RWPE1 (cell line): ENCODE measurements at regions of chr22 and their contacts with region 1.

Region 1: GRCh38 chr22:31661851-31662656 is at the start of gene PISD:
- DNase-seq: peak; percentile 94
- H3K27ac ChIP-seq: peak within 1 kb of the TSS; percentile 89
- CTCF ChIP-seq: no peak

Region 2: GRCh38 chr22:31337161-31337560 is 324.9 kb before region 1 on chr22:
- CTCF ChIA-PET with region 1: no interaction called
- POLR2A ChIA-PET with region 1: no interaction called
- DNase-seq: peak; percentile 38
- H3K27ac ChIP-seq: peak overlapping the region; percentile 46
- CTCF ChIP-seq: no peak

Region 3: DNA sequence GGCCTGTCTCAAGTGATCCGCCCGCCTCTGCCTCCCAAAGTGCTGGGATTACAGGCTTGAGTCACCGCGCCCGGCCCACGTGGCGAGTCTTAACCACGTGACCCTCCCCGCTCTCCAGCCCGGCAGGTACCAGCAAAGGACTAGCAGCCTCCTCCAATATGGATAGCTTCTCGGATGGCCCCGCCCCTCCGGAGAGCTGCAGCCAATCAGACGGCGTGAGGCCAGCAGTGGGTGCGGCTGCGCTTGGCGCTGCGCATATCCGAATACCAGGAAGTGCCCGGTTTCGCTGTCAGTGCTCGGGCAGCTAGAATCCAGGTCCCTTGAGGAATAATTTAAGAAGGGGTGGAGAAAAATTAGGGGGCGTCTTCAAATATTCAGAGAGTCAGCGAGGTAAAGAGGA is 14.6 kb after region 1 on chr22:
- CTCF ChIA-PET with region 1: interaction called, 13 read pairs
- POLR2A ChIA-PET with region 1: interaction called, 3 read pairs
- DNase-seq: peak; percentile 94
- H3K27ac ChIP-seq: peak overlapping the region; percentile 81
- CTCF ChIP-seq: no peak

Region 4: GRCh38 chr22:32164075-32164860 is 502.2 kb after region 1 on chr22:
- CTCF ChIA-PET with region 1: no interaction called
- POLR2A ChIA-PET with region 1: no interaction called
- DNase-seq: no peak
- H3K27ac ChIP-seq: no peak overlapping the region
- CTCF ChIP-seq: no peak